Ovary (tissue), 10 donors: ENCODE measurements at regions of chr6 and their contacts with region 1.

Region 1: DNA sequence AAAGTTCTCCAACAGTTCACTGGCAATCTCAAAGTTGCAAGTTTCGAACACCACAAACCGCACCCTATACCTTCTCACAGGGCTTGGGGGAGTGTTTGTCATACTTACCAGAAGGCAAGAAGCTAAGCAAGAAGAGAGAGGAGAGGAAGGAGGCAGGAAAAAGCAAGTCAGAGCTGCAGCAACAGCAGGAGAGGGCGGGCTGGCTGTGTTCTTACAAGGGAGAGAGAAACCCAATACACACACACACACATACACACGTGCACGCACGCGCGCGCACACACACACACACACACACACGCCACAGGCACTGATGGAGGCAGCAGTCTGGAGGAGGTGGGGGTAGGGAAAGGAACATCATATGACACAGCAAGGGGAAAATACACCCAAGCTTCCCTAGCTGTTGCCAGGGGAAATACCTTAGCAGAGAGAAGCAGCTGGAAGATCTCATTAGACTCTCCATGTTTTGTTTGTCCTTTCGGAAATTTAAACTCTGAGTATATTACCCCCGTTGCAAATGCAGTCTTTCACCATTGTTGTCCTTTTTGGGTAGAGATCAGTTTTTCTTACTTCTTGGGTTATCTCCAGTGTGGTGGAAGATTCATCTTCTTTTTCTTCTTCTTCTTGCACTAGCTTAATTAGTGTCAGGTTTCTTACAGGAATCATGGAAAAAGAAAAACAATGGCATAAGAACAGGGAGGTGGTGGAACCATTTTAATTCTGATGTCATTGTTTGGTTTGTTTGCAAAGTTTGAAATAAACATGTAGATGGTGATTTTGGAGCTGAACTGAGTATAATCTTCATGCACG is at the start of gene TXLNB:
- DNase-seq: peak; percentile 67 to 91 (median 82)
- H3K4me3 ChIP-seq: peak within 1 kb of the TSS; percentile 7
- H3K27ac ChIP-seq: peak within 1 kb of the TSS; percentile 3 to 73
- H3K4me1 ChIP-seq: peaks cover 10% of the 10 kb centered on the region
- H3K27me3 ChIP-seq: no peaks in the 10 kb centered on the region
- CTCF ChIP-seq: peak in 1 of 3 donors; percentile 15
- EP300 ChIP-seq: no peak
- POLR2A ChIP-seq: no peak
- total RNA-seq, gene TXLNB: 2.3 to 7.9 (median 3.4) TPM

Region 2: GRCh38 chr6:138129190-138129589 is 1162.8 kb before region 1 on chr6:
- intact Hi-C with region 1: loop called in 1 of 4 experiments (anchors 10 kb)
- DNase-seq: no peak
- H3K4me3 ChIP-seq: no peak overlapping the region
- H3K27ac ChIP-seq: no peak overlapping the region
- H3K4me1 ChIP-seq: no peaks in the 10 kb centered on the region
- H3K27me3 ChIP-seq: no peaks in the 10 kb centered on the region
- CTCF ChIP-seq: no peak
- EP300 ChIP-seq: no peak
- POLR2A ChIP-seq: no peak

Region 3: GRCh38 chr6:139323511-139324300 is 31.7 kb after region 1 on chr6:
- intact Hi-C with region 1: no loop called
- DNase-seq: peak; percentile 66 to 82 (median 72)
- H3K4me3 ChIP-seq: no peak overlapping the region
- H3K27ac ChIP-seq: no peak overlapping the region
- H3K4me1 ChIP-seq: no peaks in the 10 kb centered on the region
- H3K27me3 ChIP-seq: no peaks in the 10 kb centered on the region
- CTCF ChIP-seq: no peak
- EP300 ChIP-seq: no peak
- POLR2A ChIP-seq: no peak